Caco-2 (cell line): ENCODE measurements at regions of chr11 and their contacts with region 1.

Region 1: GRCh38 chr11:73661035-73661628 is 14.8 kb downstream of the PLEKHB1 start:
- DNase-seq: peak; percentile 70 to 83
- H3K4me3 ChIP-seq: no peak overlapping the region
- H3K4me3 Mint-ChIP-seq: no peak overlapping the region
- H3K27ac Mint-ChIP-seq: no peak overlapping the region
- H3K4me1 ChIP-seq: no peaks in the 10 kb centered on the region
- H3K4me1 Mint-ChIP-seq: no peaks in the 10 kb centered on the region
- H3K27me3 ChIP-seq: no peaks in the 10 kb centered on the region
- H3K27me3 Mint-ChIP-seq: no peaks in the 10 kb centered on the region
- CTCF ChIP-seq: peak; percentile 77 to 88

Region 2: GRCh38 chr11:73404048-73404447 is 257.1 kb before region 1 on chr11:
- CTCF ChIA-PET with region 1: interaction called, 7 read pairs
- POLR2A ChIA-PET with region 1: no interaction called
- intact Hi-C with region 1: loop called (anchors 2 kb)
- DNase-seq: peak; percentile 81 to 85
- H3K4me3 ChIP-seq: no peak overlapping the region
- H3K4me3 Mint-ChIP-seq: no peak overlapping the region
- H3K27ac Mint-ChIP-seq: no peak overlapping the region
- H3K4me1 ChIP-seq: no peaks in the 10 kb centered on the region
- H3K4me1 Mint-ChIP-seq: no peaks in the 10 kb centered on the region
- H3K27me3 ChIP-seq: no peaks in the 10 kb centered on the region
- H3K27me3 Mint-ChIP-seq: no peaks in the 10 kb centered on the region
- CTCF ChIP-seq: peak; percentile 71 to 93

Region 3: GRCh38 chr11:73478738-73479347 is 182.3 kb before region 1 on chr11:
- CTCF ChIA-PET with region 1: no interaction called
- POLR2A ChIA-PET with region 1: no interaction called
- intact Hi-C with region 1: loop called (anchors 5 kb)
- DNase-seq: peak in 1 of 2 experiments; percentile 63
- H3K4me3 ChIP-seq: no peak overlapping the region
- H3K4me3 Mint-ChIP-seq: no peak overlapping the region
- H3K27ac Mint-ChIP-seq: no peak overlapping the region
- H3K4me1 ChIP-seq: peaks cover 5% of the 10 kb centered on the region; the same call in 1 of the 2 replicates
- H3K4me1 Mint-ChIP-seq: peaks cover 6% of the 10 kb centered on the region
- H3K27me3 ChIP-seq: no peaks in the 10 kb centered on the region
- H3K27me3 Mint-ChIP-seq: no peaks in the 10 kb centered on the region
- CTCF ChIP-seq: peak; percentile 95 to 98

Region 4: GRCh38 chr11:73876424-73877300 is 215.5 kb after region 1 on chr11 and contains the starts of genes COA4 and PAAF1:
- CTCF ChIA-PET with region 1: no interaction called
- POLR2A ChIA-PET with region 1: no interaction called
- intact Hi-C with region 1: no loop called
- DNase-seq: peak; percentile 100
- H3K4me3 ChIP-seq: peak within 1 kb of the TSS; percentile 62
- H3K4me3 Mint-ChIP-seq: peak within 1 kb of the TSS; percentile 91
- H3K27ac Mint-ChIP-seq: peak within 1 kb of the TSS; percentile 95
- H3K4me1 ChIP-seq: peaks cover 23% of the 10 kb centered on the region
- H3K4me1 Mint-ChIP-seq: peaks cover 6% of the 10 kb centered on the region
- H3K27me3 ChIP-seq: no peaks in the 10 kb centered on the region
- H3K27me3 Mint-ChIP-seq: no peaks in the 10 kb centered on the region
- CTCF ChIP-seq: no peak
- total RNA-seq, gene COA4: 127 and 137 TPM in 2 replicates
- total RNA-seq, gene PAAF1: 51.6 and 53.4 TPM in 2 replicates

Region 5: DNA sequence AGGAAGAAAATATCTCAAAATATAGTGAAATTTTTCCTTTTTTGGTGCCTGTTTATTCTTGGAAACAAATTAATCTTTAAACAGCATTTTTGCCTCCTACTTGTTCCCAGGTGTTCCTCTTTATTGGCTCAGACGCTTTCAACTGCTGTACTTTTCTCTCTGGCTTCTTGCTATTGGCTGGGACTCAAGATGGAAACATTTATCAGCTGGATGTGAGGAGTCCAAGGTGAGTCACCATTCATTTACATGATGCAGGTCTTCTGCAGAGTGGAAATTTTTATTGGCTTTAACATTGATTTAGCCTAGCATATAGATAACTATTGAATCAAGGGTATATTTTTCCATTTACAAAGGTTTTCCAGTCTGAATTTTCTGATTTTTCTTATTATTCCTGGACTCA is 255.3 kb after region 1 on chr11:
- CTCF ChIA-PET with region 1: interaction called, 10 read pairs
- POLR2A ChIA-PET with region 1: no interaction called
- intact Hi-C with region 1: no loop called
- DNase-seq: no peak
- H3K4me3 ChIP-seq: no peak overlapping the region
- H3K4me3 Mint-ChIP-seq: no peak overlapping the region
- H3K27ac Mint-ChIP-seq: no peak overlapping the region
- H3K4me1 ChIP-seq: no peaks in the 10 kb centered on the region
- H3K4me1 Mint-ChIP-seq: peaks cover 6% of the 10 kb centered on the region
- H3K27me3 ChIP-seq: no peaks in the 10 kb centered on the region
- H3K27me3 Mint-ChIP-seq: no peaks in the 10 kb centered on the region
- CTCF ChIP-seq: no peak

Region 6: GRCh38 chr11:74185695-74186094 is 524.6 kb after region 1 on chr11:
- CTCF ChIA-PET with region 1: no interaction called
- POLR2A ChIA-PET with region 1: no interaction called
- intact Hi-C with region 1: no loop called
- DNase-seq: no peak
- H3K4me3 ChIP-seq: no peak overlapping the region
- H3K4me3 Mint-ChIP-seq: no peak overlapping the region
- H3K27ac Mint-ChIP-seq: no peak overlapping the region
- H3K4me1 ChIP-seq: peaks cover 9% of the 10 kb centered on the region
- H3K4me1 Mint-ChIP-seq: peaks cover 13% of the 10 kb centered on the region
- H3K27me3 ChIP-seq: no peaks in the 10 kb centered on the region
- H3K27me3 Mint-ChIP-seq: no peaks in the 10 kb centered on the region
- CTCF ChIP-seq: no peak